Heart right ventricle (tissue), 16 donors: ENCODE measurements at regions of chr1 and their contacts with region 1.

Region 1: GRCh38 chr1:231421993-231422764 is at the start of gene EGLN1:
- DNase-seq: peak; percentile 86 to 89
- ATAC-seq: peak; percentile 83 to 97 (median 90)
- H3K4me3 ChIP-seq: peak within 1 kb of the TSS; percentile 58 to 89 (median 76)
- H3K27ac ChIP-seq: peak within 1 kb of the TSS; percentile 96 to 100 (median 98)
- H3K4me1 ChIP-seq: peaks cover 6 to 60% (median 49%) of the 10 kb centered on the region in 9 donors
- H3K27me3 ChIP-seq: no peaks in the 10 kb centered on the region
- CTCF ChIP-seq: peak in 6 of 9 donors; percentile 16 to 60 (median 43)
- total RNA-seq, gene EGLN1: 62.0 to 104 (median 71.2) TPM

Region 2: DNA sequence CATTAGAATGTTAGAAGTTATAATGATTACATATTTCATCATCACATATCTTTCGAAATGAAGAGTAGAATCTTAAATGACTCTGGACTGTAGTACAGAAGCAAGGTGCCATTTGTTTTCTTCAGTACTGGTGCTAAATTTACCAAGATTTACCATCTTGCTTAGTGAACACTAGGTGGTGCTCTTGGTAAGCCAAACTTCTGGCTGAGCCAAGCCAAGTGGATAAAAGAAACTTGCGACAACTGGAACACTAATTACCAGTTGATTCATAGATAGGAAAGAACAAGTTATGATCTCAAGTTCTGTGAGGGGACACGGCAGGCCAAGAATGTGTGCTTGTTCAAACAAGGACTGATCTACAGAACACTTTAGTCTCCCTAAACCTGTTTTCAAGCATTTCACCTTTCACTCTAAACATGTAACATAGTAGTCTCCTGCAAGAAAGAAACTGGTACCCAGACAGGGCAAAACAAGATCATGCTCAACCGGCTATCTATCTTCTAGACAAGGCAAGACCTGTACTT is 64.3 kb before region 1 on chr1:
- intact Hi-C with region 1: loop called in 4 of 10 experiments (anchors 2 to 5 kb)
- DNase-seq: peak in 1 of 2 donors; percentile 35
- ATAC-seq: peak; percentile 60 to 82 (median 79)
- H3K4me3 ChIP-seq: no peak overlapping the region
- H3K27ac ChIP-seq: peak overlapping the region in 5 of 10 donors; percentile 1 to 61 (median 20)
- H3K4me1 ChIP-seq: peaks cover 0 to 28% (median 20%) of the 10 kb centered on the region in 9 donors
- H3K27me3 ChIP-seq: no peaks in the 10 kb centered on the region
- CTCF ChIP-seq: peak; percentile 62 to 89 (median 82)

Region 3: GRCh38 chr1:231369282-231369681 is 52.9 kb before region 1 on chr1:
- intact Hi-C with region 1: loop called in 4 of 10 experiments (anchors 5 kb)
- DNase-seq: no peak
- ATAC-seq: no peak
- H3K4me3 ChIP-seq: no peak overlapping the region
- H3K27ac ChIP-seq: peak overlapping the region in 1 of 10 donors; percentile 24
- H3K4me1 ChIP-seq: peaks cover 0 to 26% (median 0%) of the 10 kb centered on the region in 9 donors
- H3K27me3 ChIP-seq: no peaks in the 10 kb centered on the region
- CTCF ChIP-seq: peak in 4 of 9 donors; percentile 4 to 21 (median 17)

Region 4: GRCh38 chr1:231383159-231383860 is 38.9 kb before region 1 on chr1:
- intact Hi-C with region 1: loop called in 2 of 10 experiments (anchors 5 kb)
- DNase-seq: no peak
- ATAC-seq: peak in 1 of 8 donors; percentile 41
- H3K4me3 ChIP-seq: no peak overlapping the region
- H3K27ac ChIP-seq: peak overlapping the region in 1 of 10 donors; percentile 22
- H3K4me1 ChIP-seq: peaks cover 5 to 90% (median 73%) of the 10 kb centered on the region in 9 donors
- H3K27me3 ChIP-seq: no peaks in the 10 kb centered on the region
- CTCF ChIP-seq: no peak

Region 5: DNA sequence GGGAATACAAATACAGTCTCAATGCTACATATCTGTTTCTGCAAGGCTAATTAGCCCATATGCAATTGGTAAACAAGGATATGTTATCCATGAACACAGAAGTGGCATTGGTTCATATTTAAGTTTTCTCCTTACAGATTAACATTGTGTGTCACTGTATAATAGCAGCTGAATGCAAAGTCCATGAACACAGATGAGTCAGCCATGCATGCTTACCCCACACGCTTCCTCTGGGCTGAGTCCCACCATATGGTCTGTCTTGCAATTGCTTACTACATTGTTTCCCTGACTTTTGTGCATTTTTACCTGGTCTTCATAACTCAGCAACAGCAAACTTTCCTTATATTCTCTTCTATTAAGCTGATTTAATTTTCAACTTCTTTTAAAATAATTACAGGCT is 64.8 kb after region 1 on chr1:
- intact Hi-C with region 1: no loop called
- DNase-seq: no peak
- ATAC-seq: no peak
- H3K4me3 ChIP-seq: no peak overlapping the region
- H3K27ac ChIP-seq: no peak overlapping the region
- H3K4me1 ChIP-seq: no peaks in the 10 kb centered on the region
- H3K27me3 ChIP-seq: no peaks in the 10 kb centered on the region
- CTCF ChIP-seq: no peak

Region 6: DNA sequence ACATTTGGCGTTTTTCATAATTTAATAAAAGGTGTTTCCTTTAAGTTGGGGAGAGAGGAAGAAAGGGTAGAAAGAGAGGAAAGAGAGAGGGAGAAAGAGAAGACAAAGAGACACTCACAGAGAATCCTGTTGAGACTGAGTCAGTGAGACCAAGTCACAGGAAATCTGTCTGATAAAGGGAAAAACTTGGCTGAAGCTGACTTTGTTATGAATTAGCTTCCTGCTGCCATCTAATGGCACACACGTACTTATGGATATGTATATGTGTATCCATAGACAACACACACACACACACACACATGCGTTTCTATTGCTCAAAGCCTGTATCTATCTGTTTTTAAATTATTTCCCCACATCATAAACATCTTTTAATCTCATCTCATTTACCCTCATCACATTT is 161.9 kb after region 1 on chr1:
- intact Hi-C with region 1: loop called in 1 of 10 experiments (anchors 10 kb)
- DNase-seq: no peak
- ATAC-seq: peak in 3 of 8 donors; percentile 29 to 58 (median 49)
- H3K4me3 ChIP-seq: no peak overlapping the region
- H3K27ac ChIP-seq: peak overlapping the region in 3 of 10 donors; percentile 31 to 57 (median 45)
- H3K4me1 ChIP-seq: peaks cover 0 to 42% (median 3%) of the 10 kb centered on the region in 9 donors
- H3K27me3 ChIP-seq: no peaks in the 10 kb centered on the region
- CTCF ChIP-seq: peak in 5 of 9 donors; percentile 10 to 41 (median 21)

Region 7: GRCh38 chr1:231596337-231596791 is 174.2 kb after region 1 on chr1:
- intact Hi-C with region 1: loop called in 6 of 10 experiments (anchors 5 to 10 kb)
- DNase-seq: no peak
- ATAC-seq: peak in 4 of 8 donors; percentile 26 to 53 (median 43)
- H3K4me3 ChIP-seq: no peak overlapping the region
- H3K27ac ChIP-seq: peak overlapping the region in 7 of 10 donors; percentile 23 to 68 (median 37)
- H3K4me1 ChIP-seq: peaks cover 0 to 41% (median 15%) of the 10 kb centered on the region in 9 donors
- H3K27me3 ChIP-seq: no peaks in the 10 kb centered on the region
- CTCF ChIP-seq: no peak